Aorta (tissue), 5 donors: ENCODE measurements at regions of chr22 and their contacts with region 1.

Region 1: DNA sequence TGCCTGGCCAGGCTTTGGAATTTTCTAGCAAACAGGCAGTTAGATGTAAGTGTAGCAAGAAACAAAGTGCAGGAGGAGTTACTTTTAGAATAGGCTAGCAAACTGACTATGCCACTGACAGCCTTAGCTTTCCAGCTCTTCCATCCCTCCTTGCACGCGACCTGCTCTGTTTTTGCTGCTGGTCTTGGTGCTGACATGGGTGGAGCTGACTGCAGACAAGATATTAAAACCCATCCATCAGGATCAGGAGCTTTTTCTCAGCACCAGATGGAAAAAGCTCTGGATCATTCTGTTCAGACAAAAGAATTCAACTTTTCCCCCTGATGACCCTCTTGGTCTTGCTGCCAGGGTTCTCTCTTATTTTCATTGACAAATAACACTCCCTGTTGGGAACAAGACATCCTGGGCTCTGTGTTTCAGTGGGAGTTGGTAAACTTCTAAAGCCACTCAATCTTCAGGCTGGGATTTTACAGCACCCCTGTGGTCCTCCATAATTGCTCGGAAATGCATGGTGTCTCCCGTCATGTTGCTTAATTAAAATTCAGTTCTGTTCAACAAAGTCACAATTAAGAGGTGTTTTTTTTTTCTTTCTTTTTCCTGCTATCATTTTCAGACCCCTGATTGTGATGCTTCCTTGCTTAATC is 240.0 kb upstream of the LARGE1 start:
- DNase-seq: no peak
- ATAC-seq: no peak
- H3K4me3 ChIP-seq: no peak overlapping the region
- H3K27ac ChIP-seq: no peak overlapping the region
- H3K4me1 ChIP-seq: no peaks in the 10 kb centered on the region
- H3K27me3 ChIP-seq: peaks cover 0 to 3% of the 10 kb centered on the region in 2 donors

Region 2: DNA sequence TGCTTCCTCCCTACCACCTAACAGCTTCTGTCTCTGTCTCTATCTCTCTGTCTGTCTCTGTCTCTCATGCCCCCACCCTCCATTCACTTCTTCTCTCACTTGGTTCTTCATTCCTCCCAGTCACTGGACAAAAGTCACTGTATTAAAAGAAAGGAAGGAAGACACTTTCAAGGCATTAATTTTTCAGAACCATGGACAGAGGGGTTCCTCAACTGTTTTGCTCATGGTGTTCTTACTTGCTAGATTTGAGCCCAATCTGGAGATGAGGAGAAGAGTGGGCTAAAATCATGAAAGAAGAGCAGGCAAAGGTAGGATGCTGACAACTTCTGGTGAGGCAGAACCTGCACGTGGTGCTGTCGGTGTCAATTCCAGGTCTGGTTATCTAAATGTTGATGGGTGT is 123.3 kb before region 1 on chr22:
- intact Hi-C with region 1: no loop called
- DNase-seq: no peak
- ATAC-seq: no peak
- H3K4me3 ChIP-seq: no peak overlapping the region
- H3K27ac ChIP-seq: no peak overlapping the region
- H3K4me1 ChIP-seq: no peaks in the 10 kb centered on the region
- H3K27me3 ChIP-seq: no peaks in the 10 kb centered on the region

Region 3: GRCh38 chr22:34236527-34236926 is 76.3 kb after region 1 on chr22:
- intact Hi-C with region 1: loop called in 1 of 2 experiments (anchors 10 kb)
- DNase-seq: no peak
- ATAC-seq: no peak
- H3K4me3 ChIP-seq: no peak overlapping the region
- H3K27ac ChIP-seq: no peak overlapping the region
- H3K4me1 ChIP-seq: peaks cover 0 to 2% of the 10 kb centered on the region in 2 donors
- H3K27me3 ChIP-seq: peaks cover 0 to 2% of the 10 kb centered on the region in 2 donors